Activated naive CD4-positive, alpha-beta T cell treated with anti-CD3 and anti-CD28 coated beads for 36 hours (primary cell): ENCODE measurements at regions of chr17 and their contacts with region 1.

Region 1: GRCh38 chr17:67742025-67742424 is 24.3 kb downstream of the NOL11 start:
- DNase-seq: no peak
- H3K4me3 Mint-ChIP-seq: no peak overlapping the region
- H3K27ac Mint-ChIP-seq: no peak overlapping the region
- H3K4me1 Mint-ChIP-seq: no peaks in the 10 kb centered on the region
- H3K27me3 Mint-ChIP-seq: no peaks in the 10 kb centered on the region

Region 2: DNA sequence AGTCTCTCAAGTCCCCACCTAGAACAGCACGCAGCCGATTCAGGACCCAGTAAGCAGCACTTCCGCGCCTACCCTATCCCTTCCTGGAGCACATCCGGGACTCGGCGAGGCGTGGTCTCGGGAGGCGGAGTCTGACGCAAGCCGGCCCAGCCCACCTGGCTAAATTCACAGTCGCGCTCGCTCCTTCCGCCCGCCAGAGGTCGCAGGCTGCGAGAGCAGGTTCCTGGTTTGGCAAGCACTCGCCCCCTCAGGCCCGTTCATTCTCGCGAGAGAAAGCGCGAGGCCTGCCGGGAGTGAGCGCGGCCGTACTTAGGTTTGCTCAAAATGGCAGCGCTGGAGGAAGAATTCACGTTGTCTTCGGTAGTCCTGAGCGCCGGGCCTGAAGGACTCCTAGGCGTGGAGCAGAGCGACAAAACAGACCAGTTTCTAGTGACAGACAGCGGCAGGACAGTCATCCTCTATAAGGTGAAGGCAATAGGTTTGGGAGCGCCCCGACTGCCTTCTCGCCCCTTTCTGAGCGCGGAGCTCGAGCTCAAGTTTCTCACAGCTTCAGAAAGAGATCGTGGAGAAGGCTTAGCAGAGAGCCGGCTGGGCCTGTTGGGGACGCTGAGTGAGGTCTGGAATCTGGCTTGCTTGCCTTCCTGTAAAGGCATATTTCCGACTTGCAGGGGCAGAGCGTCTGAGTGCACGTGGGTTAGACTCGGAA is 24.2 kb before region 1 on chr17 and contains the start of gene NOL11:
- CTCF ChIA-PET with region 1: interaction called, 11 read pairs
- intact Hi-C with region 1: no loop called
- DNase-seq: peak; percentile 100
- H3K4me3 Mint-ChIP-seq: peak within 1 kb of the TSS; percentile 100
- H3K27ac Mint-ChIP-seq: peak within 1 kb of the TSS; percentile 99
- H3K4me1 Mint-ChIP-seq: peaks cover 20% of the 10 kb centered on the region
- H3K27me3 Mint-ChIP-seq: peaks cover 3% of the 10 kb centered on the region
- total RNA-seq, gene NOL11: 49.7 to 54.1 TPM